Activated CD4-positive, alpha-beta memory T cell treated with anti-CD3 and anti-CD28 coated beads for 36 hours (primary cell): ENCODE measurements at regions of chr15 and their contacts with region 1.

Region 1: GRCh38 chr15:60362321-60363086 is 35.3 kb downstream of the ANXA2 start:
- DNase-seq: peak; percentile 72
- H3K4me3 Mint-ChIP-seq: no peak overlapping the region
- H3K27ac Mint-ChIP-seq: peak overlapping the region; percentile 63
- H3K4me1 Mint-ChIP-seq: peaks cover 25% of the 10 kb centered on the region
- H3K27me3 Mint-ChIP-seq: peaks cover 2% of the 10 kb centered on the region

Region 2: DNA sequence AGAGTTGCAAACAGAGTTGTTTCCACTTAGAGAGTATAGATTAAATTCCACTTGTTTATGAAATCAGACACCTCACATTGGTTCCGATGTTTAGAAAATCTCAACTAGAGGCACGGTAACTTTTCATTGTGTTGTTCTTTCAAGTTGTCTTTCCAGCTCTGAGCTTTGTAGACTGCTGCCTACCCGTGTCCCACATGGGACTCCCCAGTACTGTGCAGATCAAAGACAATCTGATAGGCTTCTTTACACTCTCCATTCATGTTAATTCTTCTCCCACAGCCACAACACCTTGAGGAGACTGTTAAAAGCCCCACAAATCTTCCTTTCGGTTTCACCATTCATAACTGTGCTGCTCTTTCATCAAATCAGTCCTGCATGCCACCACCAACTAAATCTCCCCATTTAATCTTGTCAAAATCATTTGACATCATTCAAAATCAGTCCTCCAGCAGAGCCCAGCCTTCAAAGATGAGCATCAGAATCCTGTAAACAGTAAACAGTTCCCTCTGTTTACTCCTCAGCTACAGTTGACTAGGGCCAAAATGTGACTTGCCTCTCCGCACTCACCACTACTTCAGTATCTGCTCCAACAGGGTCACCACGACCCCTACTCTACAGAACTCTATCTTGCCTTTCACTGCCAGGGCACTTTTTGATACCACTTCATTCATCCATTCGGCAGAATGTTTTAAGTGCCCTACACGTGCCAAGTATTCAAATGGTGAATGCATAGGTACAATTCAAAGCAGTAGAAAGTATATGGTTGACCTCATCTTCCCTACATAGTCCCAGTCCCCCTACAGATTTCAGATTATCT is 27.0 kb after region 1 on chr15:
- CTCF ChIA-PET with region 1: interaction called, 6 read pairs
- POLR2A ChIA-PET with region 1: interaction called, 7 read pairs
- intact Hi-C with region 1: loop called (anchors 2 kb)
- DNase-seq: peak; percentile 63
- H3K4me3 Mint-ChIP-seq: peak overlapping the region; percentile 34
- H3K27ac Mint-ChIP-seq: peak overlapping the region; percentile 44
- H3K4me1 Mint-ChIP-seq: peaks cover 61% of the 10 kb centered on the region
- H3K27me3 Mint-ChIP-seq: no peaks in the 10 kb centered on the region

Region 3: GRCh38 chr15:60397772-60398445 is 35.4 kb after region 1 on chr15 and contains the start of gene ANXA2:
- CTCF ChIA-PET with region 1: interaction called, 15 read pairs
- POLR2A ChIA-PET with region 1: interaction called, 20 read pairs
- intact Hi-C with region 1: no loop called
- DNase-seq: peak; percentile 89
- H3K4me3 Mint-ChIP-seq: peak within 1 kb of the TSS; percentile 93
- H3K27ac Mint-ChIP-seq: peak within 1 kb of the TSS; percentile 91
- H3K4me1 Mint-ChIP-seq: peaks cover 45% of the 10 kb centered on the region
- H3K27me3 Mint-ChIP-seq: peaks cover 2% of the 10 kb centered on the region
- total RNA-seq, gene ANXA2: 131 to 132 TPM

Region 4: DNA sequence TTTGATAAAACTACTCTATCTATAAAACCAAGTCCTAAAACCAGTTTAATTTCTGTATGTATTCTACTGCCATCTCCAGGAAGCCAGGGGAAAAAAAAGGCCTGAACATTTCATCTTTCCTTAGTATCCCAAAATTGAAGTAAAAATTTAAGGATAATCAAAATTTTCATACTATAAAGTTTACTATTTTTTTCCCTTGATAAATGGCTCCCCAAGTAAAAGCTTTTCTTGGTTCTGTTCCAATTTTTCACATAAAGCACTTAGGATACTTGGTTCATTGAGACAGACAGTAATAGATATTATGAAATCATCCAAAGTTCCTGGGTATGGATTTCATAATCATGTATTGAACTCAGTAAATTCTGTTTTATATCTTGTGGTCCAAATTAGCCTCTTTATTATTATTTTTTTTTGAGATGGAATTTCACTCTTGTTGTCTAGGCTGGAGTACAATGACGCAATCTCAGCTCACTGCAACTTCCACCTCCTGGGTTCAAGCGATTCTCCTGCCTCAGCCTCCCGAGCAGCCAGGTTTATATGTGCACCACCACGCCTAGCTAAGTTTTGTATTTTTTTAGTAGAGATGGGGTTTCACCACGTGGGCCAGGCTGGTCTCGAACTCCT is 81.9 kb after region 1 on chr15:
- CTCF ChIA-PET with region 1: interaction called, 21 read pairs
- POLR2A ChIA-PET with region 1: interaction called, 3 read pairs
- intact Hi-C with region 1: no loop called
- DNase-seq: no peak
- H3K4me3 Mint-ChIP-seq: no peak overlapping the region
- H3K27ac Mint-ChIP-seq: no peak overlapping the region
- H3K4me1 Mint-ChIP-seq: no peaks in the 10 kb centered on the region
- H3K27me3 Mint-ChIP-seq: no peaks in the 10 kb centered on the region

Region 5: DNA sequence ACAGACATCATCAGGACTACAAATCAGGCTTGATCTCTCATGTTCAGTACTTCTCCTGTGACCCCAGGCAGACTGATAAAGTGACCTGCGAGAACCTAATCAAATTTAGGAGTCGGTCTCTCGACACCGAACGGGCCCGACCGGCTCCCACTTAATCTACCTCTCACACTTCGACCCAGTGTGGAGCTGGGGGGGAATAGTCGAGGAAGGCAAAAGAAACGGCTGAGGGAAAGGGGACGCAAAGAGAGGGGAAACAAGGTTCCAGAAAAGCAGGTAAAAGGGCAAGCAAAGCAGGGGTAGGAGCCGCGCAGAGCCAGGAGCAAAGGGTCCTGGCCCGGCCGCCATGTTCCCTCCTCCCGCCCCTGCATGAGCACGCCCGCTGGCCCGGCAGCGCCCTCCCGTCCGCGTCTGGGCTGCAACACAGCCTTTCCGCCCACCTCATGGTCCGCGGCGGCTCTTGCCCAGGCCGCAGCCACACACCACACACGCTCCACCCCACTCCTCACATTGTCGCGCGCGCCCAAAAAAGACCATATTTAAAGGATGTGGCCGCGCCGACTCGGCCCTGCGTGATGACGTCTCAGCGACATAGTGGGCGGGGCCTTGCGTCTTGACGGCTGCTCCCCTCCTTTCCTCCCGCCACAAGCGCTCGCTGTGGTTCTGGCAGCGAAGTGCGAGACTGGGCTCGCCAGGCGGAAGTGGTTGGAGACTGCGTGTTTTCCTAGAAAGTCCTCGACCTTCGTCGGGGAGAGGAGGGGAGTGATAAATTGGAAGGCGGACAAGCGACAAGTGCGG is 116.3 kb after region 1 on chr15 and contains the start of gene ICE2:
- CTCF ChIA-PET with region 1: interaction called, 3 read pairs
- POLR2A ChIA-PET with region 1: no interaction called
- intact Hi-C with region 1: loop called (anchors 2 kb)
- DNase-seq: peak; percentile 98
- H3K4me3 Mint-ChIP-seq: peak within 1 kb of the TSS; percentile 99
- H3K27ac Mint-ChIP-seq: peak within 1 kb of the TSS; percentile 98
- H3K4me1 Mint-ChIP-seq: peaks cover 55% of the 10 kb centered on the region
- H3K27me3 Mint-ChIP-seq: no peaks in the 10 kb centered on the region
- total RNA-seq, gene ICE2: 66.0 to 71.3 TPM

Region 6: GRCh38 chr15:60507596-60508424 is 145.3 kb after region 1 on chr15:
- CTCF ChIA-PET with region 1: interaction called, 35 read pairs
- POLR2A ChIA-PET with region 1: interaction called, 4 read pairs
- intact Hi-C with region 1: loop called (anchors 2 kb)
- DNase-seq: peak; percentile 56
- H3K4me3 Mint-ChIP-seq: no peak overlapping the region
- H3K27ac Mint-ChIP-seq: peak overlapping the region; percentile 69
- H3K4me1 Mint-ChIP-seq: peaks cover 56% of the 10 kb centered on the region
- H3K27me3 Mint-ChIP-seq: no peaks in the 10 kb centered on the region

Region 7: DNA sequence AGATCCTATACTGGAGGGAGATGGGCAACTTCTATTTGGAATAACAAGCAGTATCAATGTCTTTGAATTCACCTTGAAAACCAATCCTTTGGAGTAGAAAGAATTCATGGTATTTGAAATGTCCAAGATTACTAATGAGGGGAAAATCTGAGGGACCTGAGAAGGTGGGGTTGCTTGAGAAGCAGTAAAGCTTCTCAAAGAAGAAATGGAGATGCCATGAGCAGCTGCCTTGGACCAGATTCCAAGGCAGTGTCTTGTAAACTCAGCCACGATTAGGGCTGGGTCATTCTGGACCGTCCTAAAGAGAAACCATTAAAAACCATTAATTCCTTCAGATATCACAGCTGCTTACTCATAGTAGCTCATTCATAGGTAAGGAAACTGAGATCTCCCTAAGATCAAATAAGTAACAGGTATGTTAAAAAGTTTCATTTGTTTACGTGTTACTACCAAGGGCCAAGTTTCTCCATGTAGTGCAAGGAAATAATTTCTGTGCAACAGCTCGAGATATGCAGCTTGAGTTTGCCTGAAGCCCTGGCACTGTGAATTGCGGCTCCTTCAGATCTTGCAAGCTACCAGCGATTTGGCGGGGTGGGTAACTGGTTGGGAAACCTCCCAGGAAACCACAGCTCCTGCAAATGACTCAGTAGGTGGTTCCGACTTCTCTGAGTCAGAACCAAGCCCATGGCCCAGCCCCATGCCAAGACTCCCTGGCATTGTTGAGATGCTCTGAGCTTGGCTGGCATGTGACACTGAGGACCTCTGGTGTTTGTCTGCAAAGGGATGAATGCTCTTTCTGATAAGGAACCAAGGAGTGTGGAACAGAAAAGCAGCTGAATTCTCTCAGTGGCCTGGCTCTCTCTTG is 569.8 kb after region 1 on chr15:
- CTCF ChIA-PET with region 1: interaction called, 13 read pairs
- POLR2A ChIA-PET with region 1: interaction called, 6 read pairs
- intact Hi-C with region 1: loop called (anchors 10 kb)
- DNase-seq: peak; percentile 86
- H3K4me3 Mint-ChIP-seq: no peak overlapping the region
- H3K27ac Mint-ChIP-seq: no peak overlapping the region
- H3K4me1 Mint-ChIP-seq: peaks cover 15% of the 10 kb centered on the region
- H3K27me3 Mint-ChIP-seq: peaks cover 7% of the 10 kb centered on the region